ENCODE measurements at regions of chr17 and their contacts with region 1.

Region 1: GRCh38 chr17:48351831-48352332 is 78.1 kb downstream of the SKAP1 start:
- DNase-seq: peak in 2 of 9 experiments; percentile 54 to 70
- ATAC-seq: peak; percentile 76
- H3K4me3 ChIP-seq: no peak overlapping the region
- H3K4me3 Mint-ChIP-seq: no peak overlapping the region
- H3K27ac ChIP-seq: no peak overlapping the region
- H3K27ac Mint-ChIP-seq: no peak overlapping the region
- H3K4me1 ChIP-seq: peaks cover 5% of the 10 kb centered on the region
- H3K4me1 Mint-ChIP-seq: peaks cover 16% of the 10 kb centered on the region
- H3K27me3 ChIP-seq: no peaks in the 10 kb centered on the region
- H3K27me3 Mint-ChIP-seq: no peaks in the 10 kb centered on the region
- CTCF ChIP-seq: peak; percentile 87

Region 2: GRCh38 chr17:48101012-48101720 is 250.7 kb before region 1 on chr17 and contains the start of gene CBX1:
- CTCF ChIA-PET with region 1: no interaction called
- POLR2A ChIA-PET with region 1: no interaction called
- intact Hi-C with region 1: no loop called
- DNase-seq: peak; percentile 84 to 96 (median 94)
- ATAC-seq: peak; percentile 96
- H3K4me3 ChIP-seq: peak within 1 kb of the TSS; percentile 65 to 91
- H3K4me3 Mint-ChIP-seq: peak within 1 kb of the TSS; percentile 89
- H3K27ac ChIP-seq: peak within 1 kb of the TSS; percentile 24 to 50
- H3K27ac Mint-ChIP-seq: peak within 1 kb of the TSS; percentile 79
- H3K4me1 ChIP-seq: peaks cover 21% of the 10 kb centered on the region
- H3K4me1 Mint-ChIP-seq: peaks cover 37% of the 10 kb centered on the region
- H3K27me3 ChIP-seq: no peaks in the 10 kb centered on the region
- H3K27me3 Mint-ChIP-seq: no peaks in the 10 kb centered on the region
- CTCF ChIP-seq: no peak
- total RNA-seq, gene CBX1: 5.4 to 6.6 TPM

Region 3: DNA sequence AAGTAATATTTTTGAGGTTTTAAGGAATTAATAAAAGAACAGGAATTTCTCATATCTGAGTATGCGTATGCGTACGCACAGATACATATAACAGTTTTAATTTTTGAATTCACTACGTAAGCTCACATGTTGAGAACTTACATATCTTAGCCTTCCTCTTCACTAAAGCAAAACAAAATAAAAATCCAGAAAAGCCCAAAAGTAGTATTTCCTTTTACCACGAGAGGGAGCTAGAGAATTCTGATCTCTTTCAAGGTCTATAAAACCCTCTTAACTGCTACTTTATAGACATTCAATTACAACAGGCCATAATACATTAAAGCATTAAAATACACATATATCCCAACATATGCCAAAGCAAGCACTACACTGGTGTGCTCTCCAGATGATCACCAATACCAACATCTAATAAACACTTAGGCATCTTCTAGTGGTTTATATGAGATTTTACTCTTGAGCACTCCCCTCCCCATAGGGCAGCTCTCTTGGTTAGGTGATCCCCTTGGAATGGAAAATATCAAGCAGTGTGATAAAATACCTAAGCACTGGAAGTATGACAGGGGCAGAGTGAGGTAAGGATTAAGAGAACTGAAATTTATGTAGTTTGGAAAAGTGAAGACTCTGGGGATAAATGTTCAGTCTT is 15.9 kb before region 1 on chr17:
- CTCF ChIA-PET with region 1: interaction called, 29 read pairs
- POLR2A ChIA-PET with region 1: no interaction called
- intact Hi-C with region 1: loop called in 1 of 2 experiments (anchors 2 kb)
- DNase-seq: peak in 2 of 9 experiments; percentile 68 to 76
- ATAC-seq: peak; percentile 67
- H3K4me3 ChIP-seq: no peak overlapping the region
- H3K4me3 Mint-ChIP-seq: no peak overlapping the region
- H3K27ac ChIP-seq: no peak overlapping the region
- H3K27ac Mint-ChIP-seq: no peak overlapping the region
- H3K4me1 ChIP-seq: no peaks in the 10 kb centered on the region
- H3K4me1 Mint-ChIP-seq: peaks cover 9% of the 10 kb centered on the region
- H3K27me3 ChIP-seq: no peaks in the 10 kb centered on the region
- H3K27me3 Mint-ChIP-seq: no peaks in the 10 kb centered on the region
- CTCF ChIP-seq: peak; percentile 65

Region 4: GRCh38 chr17:48392857-48393256 is 41.0 kb after region 1 on chr17:
- CTCF ChIA-PET with region 1: interaction called, 4 read pairs
- POLR2A ChIA-PET with region 1: no interaction called
- intact Hi-C with region 1: loop called in 1 of 2 experiments (anchors 5 kb)
- DNase-seq: no peak
- ATAC-seq: no peak
- H3K4me3 ChIP-seq: no peak overlapping the region
- H3K4me3 Mint-ChIP-seq: no peak overlapping the region
- H3K27ac ChIP-seq: no peak overlapping the region
- H3K27ac Mint-ChIP-seq: no peak overlapping the region
- H3K4me1 ChIP-seq: no peaks in the 10 kb centered on the region
- H3K4me1 Mint-ChIP-seq: peaks cover 59% of the 10 kb centered on the region
- H3K27me3 ChIP-seq: no peaks in the 10 kb centered on the region
- H3K27me3 Mint-ChIP-seq: no peaks in the 10 kb centered on the region
- CTCF ChIP-seq: no peak

Region 5: DNA sequence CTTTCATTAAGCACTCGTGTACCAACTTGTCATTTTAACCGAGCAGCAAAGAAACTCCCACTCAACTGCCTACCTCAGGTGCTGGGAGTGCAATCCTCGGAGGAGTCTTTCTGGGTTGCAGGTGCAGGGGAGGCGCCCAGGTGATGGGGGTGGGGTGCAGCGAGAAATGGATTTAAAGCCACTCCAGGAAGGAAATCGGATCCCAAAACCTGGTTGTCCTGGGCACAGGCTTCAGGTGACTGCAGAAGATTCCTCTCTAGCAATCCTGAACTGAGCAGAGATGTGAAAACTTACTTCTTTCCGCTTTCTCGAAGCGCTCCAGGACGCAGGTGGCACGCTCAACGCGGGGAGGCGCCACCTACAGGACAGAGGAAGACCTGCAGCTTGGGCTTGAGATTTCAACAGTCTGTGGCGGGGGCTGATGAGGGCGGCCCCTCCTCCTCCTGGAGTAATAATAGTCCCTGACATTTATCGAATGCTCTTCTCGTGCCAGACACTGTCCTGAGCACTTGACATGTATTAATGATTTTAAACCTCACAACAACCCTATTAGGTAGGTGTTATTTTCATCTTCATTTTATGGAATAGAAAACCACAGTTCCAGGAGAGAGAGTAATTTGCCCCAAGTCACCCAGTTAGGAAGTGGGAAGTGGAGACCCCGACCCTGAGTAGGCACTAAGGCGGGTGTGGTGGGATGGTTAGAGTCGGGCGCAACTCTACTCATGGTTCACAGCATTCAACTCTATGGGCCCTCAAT is 105.4 kb after region 1 on chr17:
- CTCF ChIA-PET with region 1: interaction called, 81 read pairs
- POLR2A ChIA-PET with region 1: interaction called, 10 read pairs
- intact Hi-C with region 1: loop called (anchors 1 kb)
- DNase-seq: peak; percentile 49 to 90 (median 75)
- ATAC-seq: peak; percentile 85
- H3K4me3 ChIP-seq: peak overlapping the region; percentile 21 to 28
- H3K4me3 Mint-ChIP-seq: peak overlapping the region; percentile 73
- H3K27ac ChIP-seq: no peak overlapping the region
- H3K27ac Mint-ChIP-seq: peak overlapping the region; percentile 22
- H3K4me1 ChIP-seq: peaks cover 53% of the 10 kb centered on the region
- H3K4me1 Mint-ChIP-seq: peaks cover 52% of the 10 kb centered on the region
- H3K27me3 ChIP-seq: no peaks in the 10 kb centered on the region
- H3K27me3 Mint-ChIP-seq: no peaks in the 10 kb centered on the region
- CTCF ChIP-seq: peak; percentile 94

Region 6: DNA sequence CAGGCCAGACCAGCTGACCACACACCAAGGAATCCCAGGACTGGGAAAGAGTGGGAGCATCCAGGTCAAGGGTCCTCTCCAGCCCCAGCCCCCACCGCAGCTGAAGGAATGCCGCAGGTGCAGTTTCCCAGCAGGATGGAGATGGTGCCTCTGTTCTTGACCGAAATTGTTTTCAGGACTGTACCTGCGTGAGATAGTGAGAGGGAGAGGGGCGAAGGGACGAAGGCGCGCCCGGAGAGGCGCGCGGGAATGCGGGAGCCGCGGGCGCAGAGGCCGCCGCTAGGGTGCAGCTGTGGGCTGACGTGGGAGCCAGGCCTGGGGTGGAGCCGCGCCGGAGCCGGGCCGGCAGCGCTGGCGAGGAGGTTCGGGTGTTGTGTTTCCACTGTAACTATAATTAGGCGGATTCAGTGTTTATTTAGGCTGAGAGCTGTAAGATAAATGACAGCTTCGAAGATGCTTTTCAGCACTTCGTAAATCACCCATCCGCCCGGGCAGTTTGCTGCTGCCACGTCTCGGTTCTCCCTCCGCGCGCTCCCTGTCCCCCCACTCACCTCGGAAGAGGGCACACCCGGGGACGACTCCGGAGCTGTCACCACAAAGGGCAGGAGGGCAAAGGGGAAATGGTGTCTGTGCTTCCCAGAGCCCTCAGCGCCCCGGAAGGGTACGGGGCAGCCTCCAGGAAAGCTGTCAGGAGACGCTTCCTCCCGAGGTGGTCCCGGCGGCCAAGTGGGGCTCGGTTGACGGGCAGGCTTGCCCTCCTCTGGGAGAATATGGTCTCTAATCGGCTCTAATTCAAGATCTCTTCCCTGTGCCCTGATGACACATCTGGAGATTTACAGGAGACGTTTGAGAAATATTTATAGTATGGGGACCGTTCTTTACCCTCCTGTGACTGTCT is 140.8 kb after region 1 on chr17:
- CTCF ChIA-PET with region 1: interaction called, 12 read pairs
- POLR2A ChIA-PET with region 1: no interaction called
- intact Hi-C with region 1: loop called in 1 of 2 experiments (anchors 5 kb)
- DNase-seq: peak; percentile 49 to 80 (median 67)
- ATAC-seq: peak; percentile 96
- H3K4me3 ChIP-seq: peak overlapping the region; percentile 38 to 41
- H3K4me3 Mint-ChIP-seq: peak overlapping the region; percentile 61
- H3K27ac ChIP-seq: no peak overlapping the region
- H3K27ac Mint-ChIP-seq: no peak overlapping the region
- H3K4me1 ChIP-seq: no peaks in the 10 kb centered on the region
- H3K4me1 Mint-ChIP-seq: peaks cover 5% of the 10 kb centered on the region
- H3K27me3 ChIP-seq: peaks cover 0 to 7% of the 10 kb centered on the region in 2 experiments
- H3K27me3 Mint-ChIP-seq: peaks cover 26% of the 10 kb centered on the region
- CTCF ChIP-seq: peak; percentile 83

Measured in CD8-positive, alpha-beta T cell (primary cell).